T-cell (primary cell): ENCODE measurements at regions of chr2 and their contacts with region 1.

Region 1: GRCh38 chr2:50374711-50375110 is 657.2 kb downstream of the NRXN1 start:
- DNase-seq: no peak
- ATAC-seq: no peak
- H3K4me3 ChIP-seq: no peak overlapping the region
- H3K4me3 Mint-ChIP-seq: no peak overlapping the region
- H3K27ac ChIP-seq: no peak overlapping the region
- H3K27ac Mint-ChIP-seq: no peak overlapping the region
- H3K4me1 ChIP-seq: no peaks in the 10 kb centered on the region
- H3K4me1 Mint-ChIP-seq: no peaks in the 10 kb centered on the region
- H3K27me3 ChIP-seq: no peaks in the 10 kb centered on the region
- H3K27me3 Mint-ChIP-seq: peaks cover 0 to 2% of the 10 kb centered on the region in 2 donors

Region 2: GRCh38 chr2:50385349-50385748 is 10.6 kb after region 1 on chr2:
- CTCF ChIA-PET with region 1: no interaction called
- POLR2A ChIA-PET with region 1: no interaction called
- DNase-seq: no peak
- ATAC-seq: no peak
- H3K4me3 ChIP-seq: no peak overlapping the region
- H3K4me3 Mint-ChIP-seq: no peak overlapping the region
- H3K27ac ChIP-seq: no peak overlapping the region
- H3K27ac Mint-ChIP-seq: no peak overlapping the region
- H3K4me1 ChIP-seq: no peaks in the 10 kb centered on the region
- H3K4me1 Mint-ChIP-seq: no peaks in the 10 kb centered on the region
- H3K27me3 ChIP-seq: no peaks in the 10 kb centered on the region
- H3K27me3 Mint-ChIP-seq: no peaks in the 10 kb centered on the region

Region 3: DNA sequence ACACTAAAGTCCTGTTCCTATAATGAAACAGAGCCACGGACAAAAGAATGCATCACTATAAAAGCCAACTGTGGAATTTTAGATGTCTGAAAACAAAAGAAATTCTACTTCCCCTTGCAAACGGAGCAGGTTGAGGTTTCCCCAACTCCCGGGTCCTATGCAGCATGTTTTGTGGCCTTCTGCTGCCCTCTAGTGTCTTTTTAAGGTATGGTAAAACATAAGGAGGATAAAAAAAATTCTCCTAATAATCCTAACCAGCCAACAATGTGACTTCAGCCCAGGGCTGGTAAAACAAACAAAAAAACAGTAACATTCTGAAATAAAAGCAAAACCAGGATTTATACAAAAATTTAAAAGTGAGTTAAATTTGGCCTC is 117.8 kb after region 1 on chr2:
- CTCF ChIA-PET with region 1: no interaction called
- POLR2A ChIA-PET with region 1: no interaction called
- DNase-seq: peak in 10 of 35 experiments; percentile 0 to 53 (median 6)
- ATAC-seq: peak; percentile 31 to 65 (median 50)
- H3K4me3 ChIP-seq: no peak overlapping the region
- H3K4me3 Mint-ChIP-seq: peak overlapping the region in 1 of 3 donors; percentile 24
- H3K27ac ChIP-seq: no peak overlapping the region
- H3K27ac Mint-ChIP-seq: no peak overlapping the region
- H3K4me1 ChIP-seq: no peaks in the 10 kb centered on the region
- H3K4me1 Mint-ChIP-seq: peaks cover 6 to 22% (median 12%) of the 10 kb centered on the region in 3 donors
- H3K27me3 ChIP-seq: no peaks in the 10 kb centered on the region
- H3K27me3 Mint-ChIP-seq: peaks cover 3 to 5% of the 10 kb centered on the region in 2 donors

Region 4: GRCh38 chr2:51650769-51651168 is 1276.1 kb after region 1 on chr2:
- CTCF ChIA-PET with region 1: no interaction called
- POLR2A ChIA-PET with region 1: interaction called in 1 of 2 experiments, 12 read pairs
- DNase-seq: no peak
- ATAC-seq: no peak
- H3K4me3 ChIP-seq: no peak overlapping the region
- H3K4me3 Mint-ChIP-seq: no peak overlapping the region
- H3K27ac ChIP-seq: no peak overlapping the region
- H3K27ac Mint-ChIP-seq: no peak overlapping the region
- H3K4me1 ChIP-seq: no peaks in the 10 kb centered on the region
- H3K4me1 Mint-ChIP-seq: no peaks in the 10 kb centered on the region
- H3K27me3 ChIP-seq: no peaks in the 10 kb centered on the region
- H3K27me3 Mint-ChIP-seq: no peaks in the 10 kb centered on the region